ENCODE measurements at regions of chr5 and their contacts with region 1.

Region 1: GRCh38 chr5:154238776-154239481 is 48.4 kb downstream of the GALNT10 start:
- DNase-seq: no peak
- ATAC-seq: no peak
- H3K4me3 ChIP-seq: no peak overlapping the region
- H3K4me3 Mint-ChIP-seq: peak overlapping the region; percentile 17
- H3K27ac ChIP-seq: no peak overlapping the region
- H3K27ac Mint-ChIP-seq: peak overlapping the region; percentile 69 to 73
- H3K4me1 ChIP-seq: peaks cover 14% of the 10 kb centered on the region
- H3K4me1 Mint-ChIP-seq: peaks cover 74 to 82% of the 10 kb centered on the region in 2 donors
- H3K27me3 ChIP-seq: no peaks in the 10 kb centered on the region
- H3K27me3 Mint-ChIP-seq: no peaks in the 10 kb centered on the region
- CTCF ChIP-seq: no peak

Region 2: GRCh38 chr5:153998010-153998409 is 240.9 kb before region 1 on chr5:
- intact Hi-C with region 1: no loop called
- DNase-seq: no peak
- ATAC-seq: no peak
- H3K4me3 ChIP-seq: no peak overlapping the region
- H3K4me3 Mint-ChIP-seq: no peak overlapping the region
- H3K27ac ChIP-seq: no peak overlapping the region
- H3K27ac Mint-ChIP-seq: no peak overlapping the region
- H3K4me1 ChIP-seq: no peaks in the 10 kb centered on the region
- H3K4me1 Mint-ChIP-seq: no peaks in the 10 kb centered on the region
- H3K27me3 ChIP-seq: no peaks in the 10 kb centered on the region
- H3K27me3 Mint-ChIP-seq: no peaks in the 10 kb centered on the region
- CTCF ChIP-seq: no peak

Region 3: GRCh38 chr5:154196955-154197652 is 41.8 kb before region 1 on chr5:
- intact Hi-C with region 1: loop called (anchors 5 kb)
- DNase-seq: peak in 1 of 2 donors; percentile 50
- ATAC-seq: peak in 2 of 3 donors; percentile 18 to 48
- H3K4me3 ChIP-seq: no peak overlapping the region
- H3K4me3 Mint-ChIP-seq: peak overlapping the region; percentile 78
- H3K27ac ChIP-seq: peak overlapping the region; percentile 76
- H3K27ac Mint-ChIP-seq: peak overlapping the region; percentile 86 to 99
- H3K4me1 ChIP-seq: peaks cover 50% of the 10 kb centered on the region
- H3K4me1 Mint-ChIP-seq: peaks cover 71 to 73% of the 10 kb centered on the region in 2 donors
- H3K27me3 ChIP-seq: no peaks in the 10 kb centered on the region
- H3K27me3 Mint-ChIP-seq: no peaks in the 10 kb centered on the region
- CTCF ChIP-seq: no peak

Region 4: GRCh38 chr5:154610321-154611154 is 371.6 kb after region 1 on chr5:
- intact Hi-C with region 1: no loop called
- DNase-seq: peak in 1 of 2 donors; percentile 64
- ATAC-seq: peak; percentile 61 to 80 (median 68)
- H3K4me3 ChIP-seq: no peak overlapping the region
- H3K4me3 Mint-ChIP-seq: no peak overlapping the region
- H3K27ac ChIP-seq: no peak overlapping the region
- H3K27ac Mint-ChIP-seq: no peak overlapping the region
- H3K4me1 ChIP-seq: peaks cover 14% of the 10 kb centered on the region
- H3K4me1 Mint-ChIP-seq: peaks cover 0 to 9% of the 10 kb centered on the region in 2 donors
- H3K27me3 ChIP-seq: peaks cover 26% of the 10 kb centered on the region
- H3K27me3 Mint-ChIP-seq: peaks cover 32 to 33% of the 10 kb centered on the region in 2 donors
- CTCF ChIP-seq: peak; percentile 23

Measured in natural killer cell (primary cell).